Transverse colon (tissue), 4 donors: ENCODE measurements at regions of chr11 and their contacts with region 1.

Region 1: DNA sequence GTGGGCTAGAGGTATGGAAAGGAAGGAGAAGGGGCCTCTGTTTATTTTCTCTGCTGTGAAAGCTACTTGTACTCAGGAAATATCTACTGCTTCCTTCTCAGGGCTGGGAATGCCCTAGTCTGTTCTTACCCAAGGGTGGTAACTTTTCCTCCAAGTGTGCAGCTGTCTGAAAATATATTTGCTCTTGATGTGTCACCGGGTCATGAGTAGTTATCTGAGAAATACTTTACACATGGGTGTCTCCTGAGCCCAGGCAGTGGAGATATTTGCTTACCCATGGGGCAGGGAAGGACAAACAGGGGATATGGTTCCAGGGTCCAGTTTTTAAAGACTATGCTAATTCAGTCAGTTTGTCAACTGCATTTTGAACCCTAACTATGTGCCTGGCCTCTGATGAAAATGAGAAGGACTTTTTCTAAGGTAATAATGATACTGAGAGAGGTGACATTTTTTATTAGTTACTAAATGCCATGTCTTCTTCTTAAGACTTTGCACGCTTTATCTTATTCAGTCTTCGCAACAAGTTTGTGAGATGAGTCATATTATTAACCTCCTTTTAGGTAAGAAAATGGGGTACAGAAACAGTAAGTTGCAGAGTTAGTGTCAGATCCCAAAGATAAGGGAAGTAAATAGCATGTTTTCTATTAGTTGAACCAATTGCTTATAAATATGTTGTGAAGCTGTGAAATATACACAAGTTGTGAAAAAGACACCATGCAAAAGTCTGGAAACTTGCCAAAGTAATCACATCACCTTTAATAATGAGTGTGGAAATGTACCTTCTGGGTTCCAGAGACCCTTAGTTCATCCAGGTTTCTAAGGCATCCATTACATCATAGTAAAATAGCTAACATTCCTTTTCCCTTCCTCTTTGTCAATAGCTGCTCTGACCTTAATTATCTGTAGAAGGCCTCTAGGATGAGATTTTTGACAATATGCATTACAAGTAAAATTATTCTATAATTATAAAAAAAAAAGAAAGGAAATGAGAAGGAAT is 22.8 kb downstream of the SYTL2 start:
- DNase-seq: peak; percentile 54
- H3K4me3 ChIP-seq: no peak overlapping the region
- H3K27ac ChIP-seq: peak overlapping the region; percentile 55 to 78 (median 70)
- H3K4me1 ChIP-seq: peaks cover 0 to 56% (median 31%) of the 10 kb centered on the region in 4 donors
- H3K27me3 ChIP-seq: no peaks in the 10 kb centered on the region
- CTCF ChIP-seq: no peak
- EP300 ChIP-seq: no peak
- POLR2A ChIP-seq: peak; percentile 36

Region 2: GRCh38 chr11:85742873-85743275 is 45.2 kb before region 1 on chr11:
- in situ Hi-C with region 1: no loop called
- intact Hi-C with region 1: loop called (anchors 1 kb)
- DNase-seq: no peak
- H3K4me3 ChIP-seq: no peak overlapping the region
- H3K27ac ChIP-seq: peak overlapping the region; percentile 68 to 81 (median 74)
- H3K4me1 ChIP-seq: peaks cover 3 to 72% (median 27%) of the 10 kb centered on the region in 4 donors
- H3K27me3 ChIP-seq: no peaks in the 10 kb centered on the region
- CTCF ChIP-seq: no peak
- EP300 ChIP-seq: no peak
- POLR2A ChIP-seq: no peak